A673 (cell line): ENCODE measurements at regions of chr5 and their contacts with region 1.

Region 1: GRCh38 chr5:163269624-163270023 is 167.8 kb upstream of the CCNG1 start:
- DNase-seq: peak; percentile 66
- H3K4me3 ChIP-seq: no peak overlapping the region
- H3K27ac ChIP-seq: peak overlapping the region; percentile 43
- H3K4me1 ChIP-seq: peaks cover 23% of the 10 kb centered on the region
- H3K27me3 ChIP-seq: no peaks in the 10 kb centered on the region
- CTCF ChIP-seq: peak; percentile 60

Region 2: GRCh38 chr5:163221581-163221980 is 48.0 kb before region 1 on chr5:
- CTCF ChIA-PET with region 1: no interaction called
- POLR2A ChIA-PET with region 1: no interaction called
- intact Hi-C with region 1: loop called (anchors 5 kb)
- DNase-seq: peak; percentile 89
- H3K4me3 ChIP-seq: no peak overlapping the region
- H3K27ac ChIP-seq: peak overlapping the region; percentile 93
- H3K4me1 ChIP-seq: peaks cover 59% of the 10 kb centered on the region
- H3K27me3 ChIP-seq: no peaks in the 10 kb centered on the region
- CTCF ChIP-seq: no peak